SK-N-SH (cell line): ENCODE measurements at regions of chr16 and their contacts with region 1.

Region 1: GRCh38 chr16:74275002-74275636 is 21.5 kb upstream of the PSMD7 start:
- DNase-seq: peak; percentile 46
- H3K4me3 ChIP-seq: no peak overlapping the region; a peak in 1 of 4 replicates
- H3K27ac ChIP-seq: no peak overlapping the region
- H3K4me1 ChIP-seq: no peaks in the 10 kb centered on the region
- H3K27me3 ChIP-seq: no peaks in the 10 kb centered on the region
- CTCF ChIP-seq: peak; percentile 72
- EP300 ChIP-seq: no peak
- RAD21 ChIP-seq: peak; percentile 85

Region 2: DNA sequence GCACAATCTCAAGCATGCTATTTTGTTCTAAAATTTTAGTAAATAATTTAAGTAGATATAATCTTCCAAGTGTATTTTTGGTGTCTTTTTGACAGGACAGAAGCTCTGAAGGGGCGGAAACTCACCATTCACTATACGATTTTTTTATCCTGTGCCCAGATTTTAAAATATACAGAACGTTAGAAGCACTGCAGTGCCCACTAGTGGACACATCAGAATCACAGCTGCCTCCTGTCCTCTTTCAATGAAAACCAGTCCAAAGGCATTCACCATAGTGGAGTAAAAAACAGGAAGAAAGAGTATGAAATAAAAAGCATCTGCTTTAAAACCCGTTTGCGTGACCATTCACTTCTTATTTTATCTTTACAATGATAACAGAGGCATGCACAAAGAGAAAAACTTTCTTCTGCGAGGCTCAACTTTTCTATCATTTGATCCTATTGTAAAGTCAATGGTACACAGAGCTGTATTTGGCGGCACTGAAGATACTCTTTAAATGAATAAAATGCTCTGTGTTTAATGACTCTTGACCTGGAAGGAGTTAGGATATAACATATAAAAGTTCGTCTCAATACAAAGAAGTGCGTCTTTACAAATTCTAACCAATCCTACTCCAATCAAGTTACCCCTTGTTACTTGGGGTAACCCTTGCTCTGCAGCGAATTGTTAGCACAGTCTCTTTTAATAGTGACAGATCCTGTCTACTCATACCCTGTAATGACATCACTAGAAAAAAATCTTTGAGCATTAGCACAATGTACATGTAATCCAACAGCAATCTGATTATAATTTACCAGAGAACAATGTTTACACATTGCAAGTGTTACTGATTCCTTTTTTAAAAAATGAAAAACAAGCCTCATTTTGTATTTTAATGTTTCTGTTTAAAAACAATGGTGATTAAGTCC is 318.3 kb before region 1 on chr16:
- CTCF ChIA-PET with region 1: interaction called, 15 read pairs
- POLR2A ChIA-PET with region 1: no interaction called
- DNase-seq: peak; percentile 65
- H3K4me3 ChIP-seq: no peak overlapping the region
- H3K27ac ChIP-seq: no peak overlapping the region
- H3K4me1 ChIP-seq: no peaks in the 10 kb centered on the region; a peak in 2 of 4 replicates
- H3K27me3 ChIP-seq: no peaks in the 10 kb centered on the region
- CTCF ChIP-seq: peak; percentile 95
- EP300 ChIP-seq: no peak
- RAD21 ChIP-seq: peak; percentile 91

Region 3: GRCh38 chr16:74070237-74070636 is 204.9 kb before region 1 on chr16:
- CTCF ChIA-PET with region 1: interaction called, 77 read pairs
- POLR2A ChIA-PET with region 1: no interaction called
- DNase-seq: no peak
- H3K4me3 ChIP-seq: no peak overlapping the region
- H3K27ac ChIP-seq: no peak overlapping the region
- H3K4me1 ChIP-seq: no peaks in the 10 kb centered on the region
- H3K27me3 ChIP-seq: no peaks in the 10 kb centered on the region
- CTCF ChIP-seq: no peak
- EP300 ChIP-seq: no peak
- RAD21 ChIP-seq: no peak

Region 4: GRCh38 chr16:74249254-74249653 is 25.9 kb before region 1 on chr16:
- CTCF ChIA-PET with region 1: interaction called, 17 read pairs
- POLR2A ChIA-PET with region 1: no interaction called
- DNase-seq: no peak
- H3K4me3 ChIP-seq: no peak overlapping the region
- H3K27ac ChIP-seq: no peak overlapping the region
- H3K4me1 ChIP-seq: no peaks in the 10 kb centered on the region; a peak in 1 of 4 replicates
- H3K27me3 ChIP-seq: no peaks in the 10 kb centered on the region
- CTCF ChIP-seq: no peak
- EP300 ChIP-seq: no peak
- RAD21 ChIP-seq: no peak

Region 5: GRCh38 chr16:74296432-74297144 is 21.5 kb after region 1 on chr16 and contains the start of gene PSMD7:
- CTCF ChIA-PET with region 1: interaction called, 37 read pairs
- POLR2A ChIA-PET with region 1: no interaction called
- DNase-seq: peak; percentile 92
- H3K4me3 ChIP-seq: peak within 1 kb of the TSS; percentile 83 to 87
- H3K27ac ChIP-seq: peak within 1 kb of the TSS; percentile 85 to 91
- H3K4me1 ChIP-seq: peaks cover 6 to 12% of the 10 kb centered on the region in 2 experiments
- H3K27me3 ChIP-seq: no peaks in the 10 kb centered on the region
- CTCF ChIP-seq: no peak
- EP300 ChIP-seq: no peak
- RAD21 ChIP-seq: no peak
- polyA plus RNA-seq, gene PSMD7: 133 and 142 TPM in 2 replicates